Naive thymus-derived CD4-positive, alpha-beta T cell (primary cell): ENCODE measurements at regions of chr12 and their contacts with region 1.

Region 1: DNA sequence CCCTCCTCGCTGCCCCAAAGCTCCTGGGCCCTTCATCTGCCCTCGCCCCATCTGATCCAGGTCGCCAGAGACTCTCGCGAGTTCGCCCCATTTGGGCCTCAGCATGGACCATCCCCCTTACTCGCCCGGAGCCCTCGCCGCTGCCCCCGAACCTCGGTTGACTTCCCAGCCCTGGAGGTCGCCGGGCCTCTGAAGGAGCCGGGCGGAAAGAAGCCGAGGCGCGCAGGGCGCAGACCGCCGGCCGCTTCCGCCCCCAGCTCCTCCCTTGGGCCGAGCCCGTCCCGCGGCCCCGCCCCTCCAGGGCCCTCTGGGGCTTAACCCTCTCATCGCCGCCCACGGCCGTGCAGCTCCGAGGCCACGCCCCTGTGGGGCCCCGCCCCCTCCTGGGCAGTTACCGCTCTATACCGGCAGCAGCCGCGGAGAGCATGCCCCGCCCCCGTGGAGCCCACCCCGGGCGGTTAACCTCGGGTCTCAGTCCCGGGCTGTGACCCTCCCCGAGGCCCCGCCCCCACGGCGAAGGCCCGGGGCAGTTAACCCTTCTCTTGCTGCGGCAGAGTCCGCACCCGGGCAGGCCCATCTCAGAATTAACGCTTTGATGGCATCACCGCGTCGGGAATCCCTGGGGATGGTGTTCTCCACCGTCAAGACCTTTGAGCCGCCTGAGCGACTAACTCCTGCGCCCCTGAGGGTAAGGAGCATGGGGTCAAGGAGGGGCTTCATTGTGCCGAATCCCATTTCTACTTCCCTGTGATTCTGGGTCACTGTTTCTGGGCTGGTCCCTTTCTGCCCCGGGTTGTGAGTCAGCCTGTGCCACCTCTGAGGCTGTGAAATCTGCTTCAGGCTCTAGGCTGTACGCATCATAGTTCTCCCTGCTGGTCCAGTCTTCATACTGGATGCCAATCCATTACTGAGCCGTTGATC is at the start of gene SPSB2:
- DNase-seq: peak; percentile 96 to 100 (median 98)
- ATAC-seq: peak; percentile 97
- H3K4me3 ChIP-seq: peak within 1 kb of the TSS; percentile 98
- H3K4me3 Mint-ChIP-seq: peak within 1 kb of the TSS; percentile 87 to 95 (median 91)
- H3K27ac ChIP-seq: peak within 1 kb of the TSS; percentile 77
- H3K27ac Mint-ChIP-seq: peak within 1 kb of the TSS; percentile 79 to 94 (median 88)
- H3K4me1 ChIP-seq: peaks cover 32 to 34% of the 10 kb centered on the region in 2 donors
- H3K4me1 Mint-ChIP-seq: peaks cover 34 to 58% (median 47%) of the 10 kb centered on the region in 7 donors
- H3K27me3 ChIP-seq: no peaks in the 10 kb centered on the region
- H3K27me3 Mint-ChIP-seq: no peaks in the 10 kb centered on the region
- total RNA-seq, gene SPSB2: 5.1 to 20.2 (median 11.2) TPM

Region 2: DNA sequence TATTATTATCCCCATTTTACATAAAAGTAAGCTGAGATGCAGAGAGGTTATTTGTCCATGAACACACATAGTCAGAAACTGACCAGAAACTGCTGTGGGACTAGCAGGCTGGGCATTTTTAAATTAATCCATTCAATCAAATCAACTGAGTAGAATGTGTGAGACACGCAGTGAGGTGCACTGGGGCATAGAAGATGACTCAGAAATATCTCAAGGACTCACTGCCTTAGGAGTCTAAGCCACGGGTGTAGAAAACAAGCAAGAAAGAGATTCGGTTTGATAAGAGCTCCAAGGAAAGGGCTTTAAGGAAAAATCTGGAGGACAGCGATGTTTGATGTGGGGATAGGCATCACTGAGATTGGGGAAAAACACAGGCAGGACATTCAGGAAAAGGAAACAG is 1056.1 kb before region 1 on chr12:
- CTCF ChIA-PET with region 1: no interaction called
- POLR2A ChIA-PET with region 1: no interaction called
- intact Hi-C with region 1: no loop called
- DNase-seq: no peak
- ATAC-seq: no peak
- H3K4me3 ChIP-seq: no peak overlapping the region
- H3K4me3 Mint-ChIP-seq: no peak overlapping the region
- H3K27ac ChIP-seq: no peak overlapping the region
- H3K27ac Mint-ChIP-seq: no peak overlapping the region
- H3K4me1 ChIP-seq: no peaks in the 10 kb centered on the region
- H3K4me1 Mint-ChIP-seq: peaks cover 0 to 2% (median 0%) of the 10 kb centered on the region in 7 donors
- H3K27me3 ChIP-seq: no peaks in the 10 kb centered on the region
- H3K27me3 Mint-ChIP-seq: peaks cover 3 to 26% (median 14%) of the 10 kb centered on the region in 5 donors

Region 3: GRCh38 chr12:5960783-5961182 is 912.6 kb before region 1 on chr12:
- CTCF ChIA-PET with region 1: no interaction called
- POLR2A ChIA-PET with region 1: no interaction called
- intact Hi-C with region 1: no loop called
- DNase-seq: no peak
- ATAC-seq: no peak
- H3K4me3 ChIP-seq: no peak overlapping the region
- H3K4me3 Mint-ChIP-seq: no peak overlapping the region
- H3K27ac ChIP-seq: no peak overlapping the region
- H3K27ac Mint-ChIP-seq: no peak overlapping the region
- H3K4me1 ChIP-seq: no peaks in the 10 kb centered on the region
- H3K4me1 Mint-ChIP-seq: peaks cover 0 to under 1% (median 0%) of the 10 kb centered on the region in 7 donors
- H3K27me3 ChIP-seq: no peaks in the 10 kb centered on the region
- H3K27me3 Mint-ChIP-seq: peaks cover 4 to 21% (median 15%) of the 10 kb centered on the region in 5 donors

Region 4: GRCh38 chr12:6607751-6608591 is 265.4 kb before region 1 on chr12:
- CTCF ChIA-PET with region 1: no interaction called
- POLR2A ChIA-PET with region 1: interaction called, 3 read pairs
- intact Hi-C with region 1: loop called in 1 of 2 experiments (anchors 2 kb)
- DNase-seq: peak in 8 of 9 donors; percentile 56 to 81 (median 71)
- ATAC-seq: peak; percentile 49
- H3K4me3 ChIP-seq: no peak overlapping the region
- H3K4me3 Mint-ChIP-seq: no peak overlapping the region
- H3K27ac ChIP-seq: peak overlapping the region; percentile 96
- H3K27ac Mint-ChIP-seq: no peak overlapping the region
- H3K4me1 ChIP-seq: peaks cover 46 to 47% of the 10 kb centered on the region in 2 donors
- H3K4me1 Mint-ChIP-seq: peaks cover 48 to 55% (median 51%) of the 10 kb centered on the region in 7 donors
- H3K27me3 ChIP-seq: no peaks in the 10 kb centered on the region
- H3K27me3 Mint-ChIP-seq: no peaks in the 10 kb centered on the region

Region 5: GRCh38 chr12:6825398-6826124 is 47.8 kb before region 1 on chr12:
- CTCF ChIA-PET with region 1: interaction called, 3 read pairs
- POLR2A ChIA-PET with region 1: interaction called, 4 read pairs
- intact Hi-C with region 1: loop called in 1 of 2 experiments (anchors 2 kb)
- DNase-seq: peak; percentile 69 to 89 (median 78)
- ATAC-seq: peak; percentile 79
- H3K4me3 ChIP-seq: no peak overlapping the region
- H3K4me3 Mint-ChIP-seq: peak overlapping the region in 7 of 10 donors; percentile 5 to 65 (median 35)
- H3K27ac ChIP-seq: no peak overlapping the region
- H3K27ac Mint-ChIP-seq: peak overlapping the region in 4 of 9 donors; percentile 22 to 84 (median 53)
- H3K4me1 ChIP-seq: peaks cover 4 to 13% of the 10 kb centered on the region in 2 donors
- H3K4me1 Mint-ChIP-seq: peaks cover 27 to 42% (median 39%) of the 10 kb centered on the region in 7 donors
- H3K27me3 ChIP-seq: peaks cover 0 to 12% of the 10 kb centered on the region in 2 donors
- H3K27me3 Mint-ChIP-seq: peaks cover 9 to 63% (median 26%) of the 10 kb centered on the region in 5 donors

Region 6: GRCh38 chr12:6914246-6914946 is 41.0 kb after region 1 on chr12 and contains the start of gene ENO2:
- CTCF ChIA-PET with region 1: interaction called, 6 read pairs
- POLR2A ChIA-PET with region 1: interaction called, 35 read pairs
- intact Hi-C with region 1: loop called (anchors 1 to 2 kb)
- DNase-seq: peak; percentile 68 to 90 (median 81)
- ATAC-seq: peak; percentile 96
- H3K4me3 ChIP-seq: peak within 1 kb of the TSS; percentile 79
- H3K4me3 Mint-ChIP-seq: peak within 1 kb of the TSS; percentile 88 to 100 (median 96)
- H3K27ac ChIP-seq: peak within 1 kb of the TSS; percentile 86
- H3K27ac Mint-ChIP-seq: peak within 1 kb of the TSS; percentile 86 to 99 (median 93)
- H3K4me1 ChIP-seq: peaks cover 11 to 14% of the 10 kb centered on the region in 2 donors
- H3K4me1 Mint-ChIP-seq: peaks cover 0 to 53% (median 36%) of the 10 kb centered on the region in 7 donors
- H3K27me3 ChIP-seq: no peaks in the 10 kb centered on the region
- H3K27me3 Mint-ChIP-seq: peaks cover 0 to 4% (median 0%) of the 10 kb centered on the region in 5 donors
- total RNA-seq, gene ENO2: 65.3 to 193 (median 178) TPM

Region 7: GRCh38 chr12:6944381-6945186 is 71.2 kb after region 1 on chr12:
- CTCF ChIA-PET with region 1: interaction called, 21 read pairs
- POLR2A ChIA-PET with region 1: interaction called, 52 read pairs
- intact Hi-C with region 1: loop called (anchors 1 kb)
- DNase-seq: peak; percentile 70 to 87 (median 84)
- ATAC-seq: peak; percentile 65
- H3K4me3 ChIP-seq: peak overlapping the region; percentile 94
- H3K4me3 Mint-ChIP-seq: peak overlapping the region; percentile 88 to 100 (median 96)
- H3K27ac ChIP-seq: peak overlapping the region; percentile 95
- H3K27ac Mint-ChIP-seq: peak overlapping the region; percentile 95 to 100 (median 98)
- H3K4me1 ChIP-seq: peaks cover 56% of the 10 kb centered on the region in 2 donors
- H3K4me1 Mint-ChIP-seq: peaks cover 42 to 75% (median 60%) of the 10 kb centered on the region in 7 donors
- H3K27me3 ChIP-seq: no peaks in the 10 kb centered on the region
- H3K27me3 Mint-ChIP-seq: no peaks in the 10 kb centered on the region

Region 8: DNA sequence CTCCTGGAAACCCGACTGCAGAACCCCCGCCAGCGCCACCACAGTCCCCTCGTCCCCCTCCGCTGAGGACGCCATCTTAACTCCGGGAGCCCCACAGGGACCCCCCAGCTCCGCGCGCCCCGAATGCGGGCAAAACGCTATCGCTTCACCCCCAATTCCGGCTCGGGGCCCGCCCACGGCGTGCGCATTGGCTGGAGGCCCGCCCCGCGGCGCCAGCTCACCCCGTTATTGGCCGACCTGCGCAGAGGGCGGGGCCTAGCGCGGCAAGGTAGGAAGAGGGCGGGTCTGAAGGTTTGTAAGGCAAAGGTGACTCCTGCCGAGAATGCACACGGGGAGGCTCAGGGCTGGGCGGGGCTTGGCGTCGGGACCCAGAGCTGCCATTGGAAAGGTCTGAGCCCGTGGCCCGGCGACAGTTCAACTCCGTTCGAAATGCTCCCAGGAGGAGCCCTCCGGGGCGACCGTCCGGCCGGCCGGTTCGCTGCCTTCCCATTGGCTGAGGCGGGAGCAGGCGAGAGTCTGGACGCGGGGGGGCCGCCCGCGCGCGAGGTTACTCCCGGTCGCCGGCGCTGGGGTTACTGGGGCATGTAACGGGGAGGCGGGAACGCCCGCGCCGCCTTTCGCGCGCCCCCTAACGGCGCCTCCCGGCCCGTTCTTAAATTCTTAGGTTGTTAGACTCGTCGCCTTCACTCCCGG is 145.1 kb after region 1 on chr12 and contains the start of gene LPCAT3:
- CTCF ChIA-PET with region 1: interaction called, 3 read pairs
- POLR2A ChIA-PET with region 1: interaction called, 9 read pairs
- intact Hi-C with region 1: loop called (anchors 1 kb)
- DNase-seq: peak; percentile 93 to 99 (median 98)
- ATAC-seq: peak; percentile 97
- H3K4me3 ChIP-seq: peak within 1 kb of the TSS; percentile 95
- H3K4me3 Mint-ChIP-seq: peak within 1 kb of the TSS; percentile 84 to 100 (median 94)
- H3K27ac ChIP-seq: peak within 1 kb of the TSS; percentile 89
- H3K27ac Mint-ChIP-seq: peak within 1 kb of the TSS; percentile 75 to 96 (median 93)
- H3K4me1 ChIP-seq: peaks cover 11 to 12% of the 10 kb centered on the region in 2 donors
- H3K4me1 Mint-ChIP-seq: peaks cover 25 to 46% (median 41%) of the 10 kb centered on the region in 7 donors
- H3K27me3 ChIP-seq: no peaks in the 10 kb centered on the region
- H3K27me3 Mint-ChIP-seq: no peaks in the 10 kb centered on the region
- total RNA-seq, gene LPCAT3: 16.7 to 37.9 (median 27.1) TPM

Region 9: GRCh38 chr12:7129872-7130680 is 256.7 kb after region 1 on chr12 and contains the start of gene CLSTN3:
- CTCF ChIA-PET with region 1: no interaction called
- POLR2A ChIA-PET with region 1: no interaction called
- intact Hi-C with region 1: loop called in 1 of 2 experiments (anchors 1 kb)
- DNase-seq: peak; percentile 70 to 88 (median 83)
- ATAC-seq: peak; percentile 93
- H3K4me3 ChIP-seq: peak within 1 kb of the TSS; percentile 88
- H3K4me3 Mint-ChIP-seq: peak within 1 kb of the TSS; percentile 94 to 100 (median 96)
- H3K27ac ChIP-seq: peak within 1 kb of the TSS; percentile 73
- H3K27ac Mint-ChIP-seq: peak within 1 kb of the TSS; percentile 73 to 95 (median 92)
- H3K4me1 ChIP-seq: peaks cover 18% of the 10 kb centered on the region in 2 donors
- H3K4me1 Mint-ChIP-seq: peaks cover 29 to 41% (median 34%) of the 10 kb centered on the region in 7 donors
- H3K27me3 ChIP-seq: no peaks in the 10 kb centered on the region
- H3K27me3 Mint-ChIP-seq: no peaks in the 10 kb centered on the region
- total RNA-seq, gene CLSTN3: 20.2 to 76.3 (median 38.7) TPM